Endothelial cell of umbilical vein (primary cell): ENCODE measurements at regions of chr6 and their contacts with region 1.

Region 1: DNA sequence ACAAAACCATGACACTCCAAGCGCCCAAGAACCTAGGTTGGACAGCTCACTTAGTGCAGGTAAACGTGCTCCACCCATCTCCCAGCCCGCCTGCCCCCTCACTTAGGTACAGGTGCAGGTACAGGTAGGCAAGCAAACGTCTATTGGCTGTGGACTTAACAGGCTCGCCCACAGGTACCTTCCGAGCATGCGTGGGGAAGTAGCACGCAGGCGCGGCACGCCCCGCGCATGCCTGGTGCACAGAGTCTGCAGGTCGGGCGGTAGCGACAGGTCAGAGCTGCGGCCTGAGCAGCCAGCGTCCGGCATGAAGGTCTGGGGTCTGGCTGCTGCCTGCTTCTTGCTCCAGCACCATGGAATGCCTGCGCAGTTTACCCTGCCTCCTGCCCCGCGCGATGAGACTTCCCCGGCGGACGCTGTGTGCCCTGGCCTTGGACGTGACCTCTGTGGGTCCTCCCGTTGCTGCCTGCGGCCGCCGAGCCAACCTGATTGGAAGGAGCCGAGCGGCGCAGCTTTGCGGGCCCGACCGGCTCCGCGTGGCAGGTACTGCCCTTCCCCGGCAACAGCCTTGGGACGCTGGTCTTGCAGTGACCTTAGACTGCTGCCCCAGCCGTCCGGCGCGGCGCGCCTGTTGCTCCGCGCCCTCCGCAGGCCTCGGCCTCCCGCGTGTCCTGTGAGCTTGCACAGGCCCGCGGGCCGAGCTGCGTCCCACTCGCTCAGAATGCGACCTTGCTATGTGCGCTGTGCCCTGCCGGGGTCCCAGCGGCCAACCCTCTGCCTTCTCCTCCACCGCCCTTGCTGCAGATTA is at the start of gene MRS2:
- DNase-seq: peak; percentile 84
- H3K4me3 ChIP-seq: peak within 1 kb of the TSS; percentile 9 to 79 (median 59)
- H3K27ac ChIP-seq: no peak within 1 kb of the TSS
- H3K4me1 ChIP-seq: peaks cover 7% of the 10 kb centered on the region
- H3K27me3 ChIP-seq: peaks cover 8 to 14% of the 10 kb centered on the region in 2 experiments
- CTCF ChIP-seq: no peak
- POLR2A ChIP-seq: peak; percentile 87
- total RNA-seq, gene MRS2: 17.2 and 21.1 TPM in 2 replicates

Region 2: GRCh38 chr6:24359640-24360454 is 43.1 kb before region 1 on chr6:
- CTCF ChIA-PET with region 1: interaction called, 6 read pairs
- POLR2A ChIA-PET with region 1: no interaction called
- dilution Hi-C with region 1: no loop called
- intact Hi-C with region 1: loop called (anchors 2 kb)
- DNase-seq: peak; percentile 50
- H3K4me3 ChIP-seq: peak overlapping the region; percentile 36 to 45 (median 42)
- H3K27ac ChIP-seq: no peak overlapping the region
- H3K4me1 ChIP-seq: peaks cover 2% of the 10 kb centered on the region
- H3K27me3 ChIP-seq: peaks cover 11 to 31% of the 10 kb centered on the region in 2 experiments
- CTCF ChIP-seq: peak; percentile 75 to 86
- POLR2A ChIP-seq: no peak